ENCODE measurements at regions of chr3 and their contacts with region 1.

Region 1: GRCh38 chr3:47536221-47536891 is 22.8 kb upstream of the ELP6 start:
- DNase-seq: no peak
- ATAC-seq: no peak; a peak in 1 of 6 replicates
- H3K4me3 ChIP-seq: no peak overlapping the region
- H3K27ac ChIP-seq: no peak overlapping the region
- H3K4me1 ChIP-seq: no peaks in the 10 kb centered on the region
- CTCF ChIP-seq: no peak
- EP300 ChIP-seq: no peak
- POLR2A ChIP-seq: no peak
- RAD21 ChIP-seq: no peak

Region 2: GRCh38 chr3:47522082-47522987 is 14.0 kb before region 1 on chr3:
- CTCF ChIA-PET with region 1: interaction called, 25 read pairs
- POLR2A ChIA-PET with region 1: no interaction called
- DNase-seq: peak; percentile 59 to 86
- ATAC-seq: peak; percentile 96 to 97
- H3K4me3 ChIP-seq: no peak overlapping the region
- H3K27ac ChIP-seq: peak overlapping the region; percentile 5 to 69; a peak in 4 of 6 replicates
- H3K4me1 ChIP-seq: 0 out of 3 replicates have a peak, but pooled peaks cover 3% of the 10 kb centered on the region
- CTCF ChIP-seq: peak; percentile 78
- EP300 ChIP-seq: no peak
- POLR2A ChIP-seq: no peak
- RAD21 ChIP-seq: peak; percentile 93

Region 3: GRCh38 chr3:47791193-47791855 is 255.0 kb after region 1 on chr3:
- CTCF ChIA-PET with region 1: interaction called, 10 read pairs
- POLR2A ChIA-PET with region 1: no interaction called
- DNase-seq: no peak
- ATAC-seq: no peak
- H3K4me3 ChIP-seq: no peak overlapping the region
- H3K27ac ChIP-seq: no peak overlapping the region
- H3K4me1 ChIP-seq: no peaks in the 10 kb centered on the region
- CTCF ChIP-seq: no peak
- EP300 ChIP-seq: no peak
- POLR2A ChIP-seq: no peak
- RAD21 ChIP-seq: no peak